ENCODE measurements at regions of chr9 and their contacts with region 1.

Region 1: DNA sequence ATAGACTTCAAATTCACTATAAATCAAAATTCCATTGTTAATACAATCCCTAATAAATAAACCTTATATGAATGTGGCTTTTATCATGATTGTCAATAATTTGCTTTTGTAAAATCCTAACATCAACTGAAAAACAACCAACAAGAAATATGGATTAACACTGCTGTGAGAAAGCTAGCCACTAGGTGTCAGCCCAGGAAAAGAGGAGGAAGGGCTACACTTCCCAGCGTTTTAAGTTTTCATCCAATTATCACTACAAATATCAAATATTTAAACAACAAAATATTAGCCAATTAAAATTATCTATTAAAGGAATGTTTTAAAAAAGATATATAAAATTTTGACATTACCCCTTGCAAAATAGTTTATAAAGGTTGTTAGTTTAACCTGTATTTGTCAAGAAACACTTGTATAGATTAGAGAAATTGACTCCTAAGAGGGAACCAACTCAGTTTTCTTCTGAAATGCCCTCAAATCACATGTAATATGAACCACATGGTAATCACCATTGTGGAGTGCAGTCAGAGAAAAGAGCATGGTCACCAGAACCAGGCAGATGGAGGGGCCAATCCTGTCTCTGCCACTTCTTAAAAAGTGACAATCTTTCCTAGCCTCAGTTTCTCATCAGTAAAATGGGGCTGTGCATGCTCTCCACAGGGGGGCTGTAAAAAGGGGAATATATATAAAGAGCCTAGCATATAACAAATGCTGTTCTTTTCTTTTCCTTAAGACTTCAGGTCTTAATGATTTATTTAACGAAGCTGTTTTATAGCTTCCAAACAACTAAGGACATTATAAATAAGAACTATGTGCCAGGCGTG is 188.2 kb downstream of the CRB2 start:
- DNase-seq: no peak
- H3K4me3 Mint-ChIP-seq: no peak overlapping the region
- H3K27ac Mint-ChIP-seq: no peak overlapping the region
- H3K4me1 Mint-ChIP-seq: peaks cover 5% of the 10 kb centered on the region
- H3K27me3 Mint-ChIP-seq: no peaks in the 10 kb centered on the region

Region 2: GRCh38 chr9:123637945-123638634 is 93.9 kb after region 1 on chr9:
- intact Hi-C with region 1: loop called (anchors 2 kb)
- DNase-seq: peak; percentile 26
- H3K4me3 Mint-ChIP-seq: peak overlapping the region; percentile 72
- H3K27ac Mint-ChIP-seq: peak overlapping the region; percentile 64
- H3K4me1 Mint-ChIP-seq: peaks cover 36% of the 10 kb centered on the region
- H3K27me3 Mint-ChIP-seq: peaks cover 36% of the 10 kb centered on the region

Region 3: GRCh38 chr9:123929870-123930831 is 385.9 kb after region 1 on chr9 and contains the start of gene DENND1A:
- intact Hi-C with region 1: loop called (anchors 10 kb)
- DNase-seq: peak; percentile 85
- H3K4me3 Mint-ChIP-seq: peak within 1 kb of the TSS; percentile 89
- H3K27ac Mint-ChIP-seq: peak within 1 kb of the TSS; percentile 92
- H3K4me1 Mint-ChIP-seq: peaks cover 29% of the 10 kb centered on the region
- H3K27me3 Mint-ChIP-seq: peaks cover 16% of the 10 kb centered on the region
- total RNA-seq, gene DENND1A: 18.5 and 22.8 TPM in 2 replicates

Region 4: DNA sequence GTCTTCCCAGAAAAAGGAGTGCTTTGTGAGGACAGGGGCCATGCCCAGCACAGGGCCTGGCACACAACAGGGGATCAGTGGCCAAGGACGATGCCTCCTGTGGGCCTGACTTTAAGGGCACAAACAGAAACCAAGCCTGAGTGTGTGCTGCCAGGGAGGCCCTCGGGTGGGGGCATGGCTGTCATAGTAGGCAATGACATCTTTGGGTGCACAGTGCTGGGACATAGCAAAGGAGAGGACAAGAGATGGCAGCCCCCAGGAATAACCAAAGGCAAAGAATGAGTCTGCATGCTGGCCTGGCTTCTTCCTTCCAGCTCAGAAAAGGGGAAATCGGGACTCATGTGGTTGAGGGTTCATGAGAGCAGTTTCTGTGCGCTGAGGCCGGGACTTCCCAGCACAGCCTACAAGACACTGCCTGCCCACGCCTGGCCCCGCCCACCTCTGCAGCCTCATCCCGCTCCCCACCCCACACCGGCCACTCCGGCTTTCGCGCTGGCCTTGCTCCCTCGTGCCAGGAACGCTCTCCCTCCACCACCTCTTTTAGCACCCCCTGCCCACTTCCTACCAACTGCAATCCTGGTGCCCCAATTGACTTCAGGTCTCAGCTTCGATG is 453.6 kb after region 1 on chr9:
- intact Hi-C with region 1: loop called (anchors 2 kb)
- DNase-seq: no peak
- H3K4me3 Mint-ChIP-seq: peak overlapping the region; percentile 66
- H3K27ac Mint-ChIP-seq: peak overlapping the region; percentile 49
- H3K4me1 Mint-ChIP-seq: peaks cover 42% of the 10 kb centered on the region
- H3K27me3 Mint-ChIP-seq: peaks cover 74% of the 10 kb centered on the region

Region 5: GRCh38 chr9:124040935-124041816 is 497.0 kb after region 1 on chr9:
- intact Hi-C with region 1: loop called (anchors 1 kb)
- DNase-seq: peak; percentile 20
- H3K4me3 Mint-ChIP-seq: no peak overlapping the region
- H3K27ac Mint-ChIP-seq: no peak overlapping the region
- H3K4me1 Mint-ChIP-seq: peaks cover 6% of the 10 kb centered on the region
- H3K27me3 Mint-ChIP-seq: peaks cover 38% of the 10 kb centered on the region

Measured in activated T-helper 1 cell treated with anti-CD3 and anti-CD28 coated beads, Interleukin-12 subunit alpha, Interleukin-12 subunit beta, Interleukin-2, Interleukin-4 antibody, amounts not matched to agents 30 ng/mL and 10 ng/mL and 1 ng/mL, durations not matched to agents 14 hours and 24 hours and 36 hours (primary cell).